ENCODE measurements at regions of chr19 and their contacts with region 1.

Region 1: DNA sequence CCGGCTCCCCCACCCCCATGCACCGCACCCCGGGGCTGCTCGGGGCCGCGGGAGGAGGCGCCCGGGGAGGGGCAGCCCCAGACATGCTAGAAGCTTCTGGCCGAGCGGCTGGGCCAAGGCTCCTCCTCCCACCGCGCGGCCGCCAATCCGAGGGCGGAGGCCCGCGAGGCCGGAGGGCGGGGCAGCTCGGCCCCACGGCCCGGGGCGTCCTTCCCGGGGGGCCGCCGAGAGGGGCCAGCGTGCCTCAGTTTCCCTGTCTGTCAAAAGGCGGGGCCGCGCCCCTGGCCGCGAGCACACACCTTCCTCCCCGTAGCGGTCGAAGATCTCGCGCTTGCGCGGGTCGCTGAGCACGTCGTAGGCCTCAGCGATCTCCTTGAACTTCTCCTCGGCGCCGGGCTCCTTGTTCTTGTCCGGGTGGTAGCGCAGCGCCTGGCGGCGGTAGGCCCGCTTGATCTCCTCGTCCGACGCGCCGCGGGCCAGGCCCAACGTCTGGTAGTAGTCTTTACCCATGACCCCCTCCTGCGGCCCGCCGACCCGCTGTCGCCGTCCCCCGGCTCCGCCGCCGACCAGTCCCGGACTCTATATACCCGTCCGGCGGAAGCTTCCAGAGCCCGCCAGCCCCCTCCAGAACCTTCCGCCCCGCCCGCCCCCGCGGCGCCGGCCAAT is at the start of gene DNAJB1:
- DNase-seq: no peak
- ATAC-seq: peak; percentile 89
- H3K4me3 ChIP-seq: peak within 1 kb of the TSS; percentile 95
- H3K27ac ChIP-seq: peak within 1 kb of the TSS; percentile 88
- H3K4me1 ChIP-seq: peaks cover 9% of the 10 kb centered on the region
- H3K27me3 ChIP-seq: no peaks in the 10 kb centered on the region
- CTCF ChIP-seq: no peak
- EP300 ChIP-seq: peak in 1 of 2 experiments; percentile 11; a peak in 1 of 4 replicates
- POLR2A ChIP-seq: peak; percentile 92
- RAD21 ChIP-seq: no peak
- polyA plus RNA-seq, gene DNAJB1: 4.8 to 8.3 TPM

Region 2: DNA sequence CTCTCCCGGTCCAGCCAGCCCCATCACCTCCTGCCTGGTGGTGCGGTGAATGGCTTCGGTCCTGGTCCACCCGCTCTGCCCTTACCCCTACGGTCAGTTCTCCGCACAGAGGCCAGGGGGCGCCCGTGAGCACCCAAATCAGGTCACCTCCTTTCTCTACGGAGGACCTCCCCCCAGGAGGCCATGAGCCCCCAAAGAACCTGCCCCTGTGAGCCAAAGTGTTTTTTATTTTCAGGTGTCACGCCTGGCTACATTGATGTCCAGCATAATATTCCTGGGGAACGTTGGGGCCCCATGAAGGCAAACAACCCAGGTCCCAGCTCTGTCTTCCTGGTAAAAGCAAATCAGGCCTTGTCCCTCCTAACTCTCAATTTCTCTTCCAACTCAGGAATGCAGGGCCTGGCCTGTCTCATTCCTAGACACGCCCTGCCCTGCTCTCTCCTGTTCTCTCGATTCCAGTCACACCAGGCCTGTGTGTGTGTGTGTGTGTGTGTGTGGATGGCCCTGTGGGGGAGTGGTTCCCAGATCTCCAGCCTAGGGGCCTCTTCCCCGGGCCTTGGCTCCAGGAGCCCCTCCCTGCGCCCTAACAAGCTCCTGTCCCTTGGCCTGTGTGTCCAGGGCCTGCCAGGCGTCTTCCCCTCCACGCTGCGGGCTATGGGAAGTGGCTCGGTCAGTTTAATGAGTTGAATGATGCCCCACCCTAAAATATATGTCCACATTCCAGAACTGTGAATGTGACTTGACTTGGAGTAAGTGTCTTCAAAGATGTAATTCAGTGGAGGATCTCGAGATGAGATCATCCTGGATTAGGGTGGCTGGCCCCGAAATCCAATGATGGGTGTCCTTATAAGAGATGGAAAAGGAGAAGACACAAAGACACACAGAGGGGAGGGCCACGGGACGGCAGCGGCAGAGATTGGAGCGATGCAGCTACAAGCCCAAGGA is 12.2 kb before region 1 on chr19:
- CTCF ChIA-PET with region 1: interaction called, 41 read pairs
- POLR2A ChIA-PET with region 1: interaction called, 3 read pairs
- RAD21 ChIA-PET with region 1: no interaction called
- SMC1A ChIA-PET with region 1: interaction called, 4 read pairs
- in situ Hi-C with region 1: no loop called
- intact Hi-C with region 1: no loop called
- DNase-seq: no peak
- ATAC-seq: peak; percentile 97
- H3K4me3 ChIP-seq: no peak overlapping the region
- H3K27ac ChIP-seq: no peak overlapping the region
- H3K4me1 ChIP-seq: peaks cover 4% of the 10 kb centered on the region; the same call in 1 of the 2 replicates
- H3K27me3 ChIP-seq: no peaks in the 10 kb centered on the region
- CTCF ChIP-seq: peak; percentile 73 to 95 (median 85)
- EP300 ChIP-seq: no peak
- POLR2A ChIP-seq: no peak
- RAD21 ChIP-seq: peak; percentile 39; the same call in 1 of the 2 replicates

Region 3: GRCh38 chr19:14529254-14530004 is 11.5 kb after region 1 on chr19 and contains the start of gene TECR:
- CTCF ChIA-PET with region 1: interaction called, 5 read pairs
- POLR2A ChIA-PET with region 1: interaction called, 12 read pairs
- RAD21 ChIA-PET with region 1: no interaction called
- SMC1A ChIA-PET with region 1: interaction called, 3 read pairs
- in situ Hi-C with region 1: no loop called
- intact Hi-C with region 1: no loop called
- DNase-seq: peak; percentile 99
- ATAC-seq: peak; percentile 99
- H3K4me3 ChIP-seq: peak within 1 kb of the TSS; percentile 79
- H3K27ac ChIP-seq: peak within 1 kb of the TSS; percentile 80
- H3K4me1 ChIP-seq: peaks cover 5% of the 10 kb centered on the region; the same call in 1 of the 2 replicates
- H3K27me3 ChIP-seq: no peaks in the 10 kb centered on the region
- CTCF ChIP-seq: no peak
- EP300 ChIP-seq: no peak
- POLR2A ChIP-seq: peak; percentile 99
- RAD21 ChIP-seq: no peak
- polyA plus RNA-seq, gene TECR: 9.6 to 23.9 TPM